ENCODE measurements at regions of chr14 and their contacts with region 1.

Region 1: DNA sequence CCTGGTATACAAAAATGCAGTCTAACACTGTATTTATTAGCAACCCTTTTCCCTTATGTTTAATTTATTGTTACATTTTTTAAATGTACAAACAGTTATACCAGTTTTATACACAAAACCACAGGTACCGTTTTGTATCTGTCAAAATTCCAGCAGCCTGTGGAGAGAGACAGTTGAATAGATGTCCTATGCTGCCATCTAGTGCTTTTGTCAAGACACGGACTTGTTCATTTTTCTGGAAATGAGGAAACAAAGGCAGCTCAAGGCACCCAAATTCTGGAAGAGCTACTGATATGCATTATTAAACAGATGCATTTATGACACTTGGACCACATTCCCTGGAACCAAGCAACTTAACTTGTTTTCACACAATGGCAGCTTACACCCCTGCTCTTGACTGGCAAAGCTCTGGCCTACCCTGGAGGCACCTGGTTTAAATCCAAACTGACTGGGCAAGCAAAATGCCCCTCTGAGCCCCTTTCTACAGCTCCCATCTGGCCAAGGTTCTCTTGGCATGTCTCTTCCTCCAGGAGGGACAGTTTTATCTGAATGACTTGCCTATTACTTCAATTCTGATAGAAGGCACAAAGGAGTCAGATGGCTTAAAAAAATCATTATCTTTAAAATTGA is 286.9 kb upstream of the PRKD1 start:
- DNase-seq: peak; percentile 72
- H3K4me3 Mint-ChIP-seq: no peak overlapping the region
- H3K27ac Mint-ChIP-seq: no peak overlapping the region
- H3K4me1 Mint-ChIP-seq: peaks cover 4% of the 10 kb centered on the region
- H3K27me3 Mint-ChIP-seq: no peaks in the 10 kb centered on the region
- CTCF ChIP-seq: peak; percentile 54

Region 2: GRCh38 chr14:29548948-29549370 is 665.6 kb before region 1 on chr14:
- CTCF ChIA-PET with region 1: interaction called, 59 read pairs
- POLR2A ChIA-PET with region 1: interaction called, 4 read pairs
- intact Hi-C with region 1: loop called (anchors 1 kb)
- DNase-seq: peak; percentile 64
- H3K4me3 Mint-ChIP-seq: no peak overlapping the region
- H3K27ac Mint-ChIP-seq: no peak overlapping the region
- H3K4me1 Mint-ChIP-seq: no peaks in the 10 kb centered on the region
- H3K27me3 Mint-ChIP-seq: peaks cover 22% of the 10 kb centered on the region
- CTCF ChIP-seq: peak; percentile 40

Region 3: DNA sequence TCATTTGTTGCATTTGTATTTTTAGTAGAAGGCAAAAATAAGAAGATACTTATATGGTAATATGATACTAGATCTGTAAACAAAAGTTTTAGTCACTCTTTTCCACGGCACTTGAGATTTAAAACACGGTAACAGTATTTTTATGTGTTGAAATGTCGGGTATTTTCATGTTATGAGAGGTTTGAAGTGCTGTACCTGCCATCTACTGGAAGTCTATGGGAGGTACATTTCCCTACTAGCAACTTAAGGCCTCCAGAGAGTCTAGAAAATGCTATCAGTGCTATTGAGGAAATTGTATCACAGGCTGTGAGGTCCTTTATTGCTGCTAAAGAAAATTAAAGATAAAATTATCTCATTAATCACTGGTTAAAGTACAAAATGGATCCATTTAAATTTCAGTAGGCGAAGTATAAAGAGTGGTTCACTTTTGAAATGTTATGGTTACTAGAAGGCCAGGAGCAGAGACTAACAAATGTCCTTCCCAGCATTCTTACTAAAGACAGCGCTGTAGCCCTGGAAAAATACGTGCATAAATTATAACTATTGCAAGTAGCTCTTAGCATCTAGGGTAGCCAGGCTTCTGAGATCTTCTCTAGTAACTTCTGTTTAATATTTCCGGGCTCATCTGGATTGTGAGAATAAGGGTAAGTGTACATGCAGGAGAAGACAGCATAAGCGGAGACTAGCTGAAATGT is 209.3 kb before region 1 on chr14:
- CTCF ChIA-PET with region 1: interaction called, 12 read pairs
- POLR2A ChIA-PET with region 1: no interaction called
- intact Hi-C with region 1: loop called (anchors 1 kb)
- DNase-seq: peak; percentile 68
- H3K4me3 Mint-ChIP-seq: no peak overlapping the region
- H3K27ac Mint-ChIP-seq: no peak overlapping the region
- H3K4me1 Mint-ChIP-seq: peaks cover 7% of the 10 kb centered on the region
- H3K27me3 Mint-ChIP-seq: no peaks in the 10 kb centered on the region
- CTCF ChIP-seq: peak; percentile 78

Region 4: GRCh38 chr14:30204431-30204980 is 10.1 kb before region 1 on chr14:
- CTCF ChIA-PET with region 1: interaction called, 25 read pairs
- POLR2A ChIA-PET with region 1: no interaction called
- intact Hi-C with region 1: no loop called
- DNase-seq: no peak
- H3K4me3 Mint-ChIP-seq: no peak overlapping the region
- H3K27ac Mint-ChIP-seq: no peak overlapping the region
- H3K4me1 Mint-ChIP-seq: no peaks in the 10 kb centered on the region
- H3K27me3 Mint-ChIP-seq: no peaks in the 10 kb centered on the region
- CTCF ChIP-seq: no peak

Region 5: GRCh38 chr14:30283826-30284446 is 69.4 kb after region 1 on chr14:
- CTCF ChIA-PET with region 1: interaction called, 11 read pairs
- POLR2A ChIA-PET with region 1: no interaction called
- intact Hi-C with region 1: no loop called
- DNase-seq: peak; percentile 75
- H3K4me3 Mint-ChIP-seq: no peak overlapping the region
- H3K27ac Mint-ChIP-seq: no peak overlapping the region
- H3K4me1 Mint-ChIP-seq: no peaks in the 10 kb centered on the region
- H3K27me3 Mint-ChIP-seq: no peaks in the 10 kb centered on the region
- CTCF ChIP-seq: peak; percentile 73